ENCODE measurements at regions of chr4 and their contacts with region 1.

Region 1: DNA sequence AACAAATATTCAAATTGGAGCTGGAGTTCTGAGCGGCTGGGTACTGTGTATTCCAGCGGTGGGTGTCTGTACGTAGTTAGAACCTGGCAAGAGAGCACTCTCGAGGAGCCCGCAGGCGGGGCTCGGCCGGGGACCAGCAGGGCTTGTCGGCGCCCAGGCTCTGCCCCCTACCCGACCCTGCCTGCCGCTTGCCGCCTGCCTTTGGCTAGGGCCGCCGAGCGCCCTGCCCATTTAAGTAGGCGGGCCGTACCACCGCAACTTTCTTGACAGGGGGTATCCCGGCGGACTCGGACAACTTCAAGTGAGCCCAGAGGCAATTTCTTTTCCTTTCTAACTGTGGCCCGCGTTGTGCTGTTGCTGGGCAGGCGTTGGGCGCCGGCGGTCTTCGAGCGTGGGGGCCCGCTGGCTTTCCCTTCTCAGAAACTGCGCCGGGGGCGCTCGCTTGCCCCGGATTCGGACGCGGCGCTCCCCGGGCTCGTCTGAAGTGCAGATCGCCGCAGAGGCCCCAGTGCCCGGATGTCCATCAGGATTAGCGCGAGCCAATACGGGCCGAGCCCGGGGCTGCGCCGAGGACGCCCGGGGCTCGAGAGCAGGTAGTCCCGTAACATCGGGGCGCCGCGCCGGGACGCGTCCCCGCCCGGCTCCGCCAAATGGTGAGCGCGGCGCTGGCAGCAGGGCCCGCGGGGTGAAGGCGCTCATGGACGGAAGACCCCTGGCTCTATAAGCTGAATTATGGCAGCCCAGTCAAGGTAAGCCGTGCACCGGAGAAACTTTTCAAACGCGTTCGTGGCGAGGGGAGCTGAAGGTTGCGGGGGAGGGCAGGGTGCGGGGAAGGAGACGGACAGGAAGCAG is 72.1 kb downstream of the AFF1 start:
- DNase-seq: peak; percentile 85 to 98 (median 90)

Region 2: GRCh38 chr4:86934771-86935565 is 71.9 kb before region 1 on chr4 and contains the start of gene AFF1:
- intact Hi-C with region 1: loop called (anchors 2 kb)
- DNase-seq: peak; percentile 80 to 98 (median 88)

Region 3: DNA sequence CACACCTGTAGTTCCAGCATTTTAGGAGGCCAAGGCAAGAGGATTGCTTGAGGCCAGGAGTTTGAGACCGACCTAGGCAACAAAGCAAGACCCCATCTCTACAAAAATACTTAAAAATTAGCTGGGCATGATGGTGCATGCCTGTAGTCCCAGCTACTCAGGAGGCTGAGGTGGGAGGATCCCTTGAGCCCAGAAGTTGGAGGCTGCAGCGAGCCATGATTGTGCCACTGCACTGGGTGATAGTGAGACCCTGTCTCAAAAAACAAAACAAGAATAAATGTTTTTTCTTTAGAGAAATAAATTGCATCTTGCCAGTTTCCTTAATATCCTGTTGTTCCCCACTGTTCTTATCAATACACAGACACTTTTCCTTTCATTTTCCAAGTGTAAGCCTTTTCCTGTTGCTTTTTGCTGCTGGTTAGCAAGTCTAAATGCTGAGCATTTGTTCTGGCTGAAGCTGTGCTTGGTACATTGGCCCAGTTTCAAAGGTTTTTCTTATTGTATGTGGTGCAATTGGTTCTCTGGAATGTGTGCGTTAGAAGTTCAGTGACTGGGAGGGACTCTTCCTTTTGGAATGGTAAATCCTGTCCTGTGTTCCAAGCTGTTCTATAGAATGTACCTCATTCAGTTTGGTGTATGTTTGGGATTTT is 26.1 kb after region 1 on chr4:
- intact Hi-C with region 1: loop called (anchors 2 kb)
- DNase-seq: no peak

Region 4: DNA sequence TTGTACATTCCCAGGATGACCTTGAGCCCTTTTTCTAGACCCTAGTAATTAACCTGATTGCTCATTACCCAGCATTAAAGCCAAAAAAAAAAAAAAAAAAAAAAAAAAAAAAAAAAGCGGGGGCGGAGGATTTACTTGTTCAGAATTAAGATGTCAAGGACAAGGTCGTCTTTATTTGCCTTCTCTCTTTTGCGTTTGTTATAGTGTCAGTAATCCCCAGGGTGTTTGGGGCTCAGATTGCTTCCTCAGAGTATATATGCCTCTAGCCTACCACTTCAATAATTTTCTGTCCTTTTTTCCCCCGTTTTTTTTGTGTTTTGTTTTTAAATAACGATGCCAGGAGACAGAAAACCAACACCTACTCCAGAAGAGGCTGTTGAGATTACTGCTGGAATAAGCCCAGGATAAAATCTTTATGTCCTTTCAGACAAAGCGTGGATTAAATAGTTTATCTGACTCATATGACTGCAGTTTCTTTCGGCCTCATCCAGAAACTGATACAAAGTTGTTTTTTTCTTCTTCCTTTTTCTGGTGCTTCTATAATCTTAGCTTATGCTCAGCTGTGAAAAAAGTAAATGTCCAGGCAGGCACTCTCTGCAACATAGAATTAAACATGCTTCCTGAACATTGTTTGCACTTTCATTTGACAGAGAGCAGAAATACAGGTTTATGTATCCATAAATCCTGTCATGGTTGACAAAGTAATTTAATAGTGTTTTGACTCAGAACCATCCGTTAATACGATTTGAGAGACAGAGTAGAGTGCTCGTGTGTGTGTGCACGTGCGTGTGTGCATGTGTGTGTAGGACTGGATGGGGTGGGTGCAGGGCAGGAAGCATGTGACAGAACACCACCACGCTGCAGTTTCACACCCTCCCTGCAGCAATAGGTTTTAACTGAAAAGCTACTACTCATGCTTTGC is 66.6 kb after region 1 on chr4:
- intact Hi-C with region 1: loop called (anchors 10 kb)
- DNase-seq: peak in 7 of 10 donors; percentile 31 to 90 (median 49)

Region 5: DNA sequence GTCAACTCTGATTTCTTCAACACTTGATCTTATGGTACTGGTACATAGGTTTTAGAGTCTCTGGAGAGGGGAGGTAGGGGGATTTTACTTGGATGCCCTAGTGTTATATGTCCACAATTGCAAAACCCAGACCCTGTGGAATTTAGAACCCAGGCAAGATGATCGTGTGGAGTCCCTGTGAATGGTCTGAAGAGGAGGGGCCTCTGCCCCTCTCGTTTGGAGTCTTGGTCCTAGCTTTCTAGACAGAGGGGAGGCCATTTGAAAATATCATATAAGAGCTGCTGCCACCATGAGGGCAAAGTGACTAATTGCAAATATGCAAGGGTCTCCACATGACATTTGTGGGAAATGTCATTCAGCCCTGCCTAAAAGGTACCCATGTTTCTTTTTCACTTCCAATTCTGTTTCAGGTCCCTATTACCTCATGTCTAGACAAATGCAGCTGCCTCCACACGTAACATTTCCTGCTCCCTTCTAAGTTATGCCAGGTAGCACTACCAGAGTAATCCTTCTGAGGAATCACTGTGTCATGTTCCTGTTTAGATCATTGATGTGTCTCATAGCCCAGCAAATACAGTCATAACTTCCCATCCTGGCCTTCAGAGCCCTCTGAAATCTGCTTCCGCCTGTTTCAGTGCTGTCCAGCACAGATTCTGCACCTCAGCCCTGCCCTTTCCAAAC is 86.7 kb after region 1 on chr4:
- intact Hi-C with region 1: loop called (anchors 5 kb)
- DNase-seq: peak in 3 of 10 donors; percentile 41 to 48 (median 42)